ENCODE measurements at regions of chr17 and their contacts with region 1.

Region 1: GRCh38 chr17:7989781-7990655 is 12.4 kb upstream of the GUCY2D start:
- DNase-seq: peak; percentile 96
- ATAC-seq: peak; percentile 94
- H3K4me3 Mint-ChIP-seq: peak overlapping the region; percentile 77
- H3K27ac Mint-ChIP-seq: peak overlapping the region; percentile 75
- H3K4me1 Mint-ChIP-seq: peaks cover 17% of the 10 kb centered on the region
- H3K27me3 Mint-ChIP-seq: peaks cover 9% of the 10 kb centered on the region
- CTCF ChIP-seq: no peak

Region 2: GRCh38 chr17:7561028-7561575 is 428.9 kb before region 1 on chr17:
- CTCF ChIA-PET with region 1: no interaction called
- POLR2A ChIA-PET with region 1: no interaction called
- intact Hi-C with region 1: no loop called
- DNase-seq: peak; percentile 76
- ATAC-seq: peak; percentile 68
- H3K4me3 Mint-ChIP-seq: peak overlapping the region; percentile 92
- H3K27ac Mint-ChIP-seq: peak overlapping the region; percentile 96
- H3K4me1 Mint-ChIP-seq: peaks cover 60% of the 10 kb centered on the region
- H3K27me3 Mint-ChIP-seq: no peaks in the 10 kb centered on the region
- CTCF ChIP-seq: no peak

Region 3: DNA sequence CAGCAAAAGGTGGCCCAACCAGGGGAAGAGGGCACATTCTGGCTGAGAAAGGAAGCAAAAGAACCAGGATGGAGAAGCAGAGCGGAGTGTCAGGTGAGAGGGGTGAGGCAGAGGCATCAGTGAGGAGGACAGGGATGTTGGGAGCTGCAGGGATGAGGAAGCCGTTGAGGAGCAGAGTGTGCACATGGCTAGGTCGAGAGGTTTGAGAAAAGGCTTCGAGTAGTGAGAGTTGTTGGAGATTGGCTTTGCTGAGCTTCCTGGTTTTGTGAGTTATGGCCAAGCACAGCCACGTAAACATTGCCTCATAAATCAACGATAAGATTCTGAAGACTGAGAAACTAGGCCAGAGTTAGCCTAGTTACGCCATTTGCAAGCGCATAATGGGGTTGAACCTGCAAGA is 245.6 kb before region 1 on chr17:
- CTCF ChIA-PET with region 1: interaction called, 24 read pairs
- POLR2A ChIA-PET with region 1: interaction called, 5 read pairs
- intact Hi-C with region 1: loop called (anchors 1 kb)
- DNase-seq: no peak
- ATAC-seq: no peak
- H3K4me3 Mint-ChIP-seq: no peak overlapping the region
- H3K27ac Mint-ChIP-seq: no peak overlapping the region
- H3K4me1 Mint-ChIP-seq: no peaks in the 10 kb centered on the region
- H3K27me3 Mint-ChIP-seq: peaks cover 13% of the 10 kb centered on the region
- CTCF ChIP-seq: no peak

Region 4: GRCh38 chr17:7862692-7863437 is 127.2 kb before region 1 on chr17:
- CTCF ChIA-PET with region 1: interaction called, 77 read pairs
- POLR2A ChIA-PET with region 1: interaction called, 5 read pairs
- intact Hi-C with region 1: loop called (anchors 1 kb)
- DNase-seq: no peak
- ATAC-seq: no peak
- H3K4me3 Mint-ChIP-seq: no peak overlapping the region
- H3K27ac Mint-ChIP-seq: no peak overlapping the region
- H3K4me1 Mint-ChIP-seq: peaks cover 11% of the 10 kb centered on the region
- H3K27me3 Mint-ChIP-seq: no peaks in the 10 kb centered on the region
- CTCF ChIP-seq: peak; percentile 90

Region 5: GRCh38 chr17:7915611-7916382 is 74.2 kb before region 1 on chr17 and contains the start of gene RNF227:
- CTCF ChIA-PET with region 1: interaction called, 90 read pairs
- POLR2A ChIA-PET with region 1: interaction called, 24 read pairs
- intact Hi-C with region 1: loop called (anchors 1 kb)
- DNase-seq: peak; percentile 81
- ATAC-seq: peak; percentile 83
- H3K4me3 Mint-ChIP-seq: peak within 1 kb of the TSS; percentile 91
- H3K27ac Mint-ChIP-seq: peak within 1 kb of the TSS; percentile 87
- H3K4me1 Mint-ChIP-seq: peaks cover 23% of the 10 kb centered on the region
- H3K27me3 Mint-ChIP-seq: no peaks in the 10 kb centered on the region
- CTCF ChIP-seq: no peak
- total RNA-seq, gene RNF227: 2.5 and 2.8 TPM in 2 replicates

Region 6: DNA sequence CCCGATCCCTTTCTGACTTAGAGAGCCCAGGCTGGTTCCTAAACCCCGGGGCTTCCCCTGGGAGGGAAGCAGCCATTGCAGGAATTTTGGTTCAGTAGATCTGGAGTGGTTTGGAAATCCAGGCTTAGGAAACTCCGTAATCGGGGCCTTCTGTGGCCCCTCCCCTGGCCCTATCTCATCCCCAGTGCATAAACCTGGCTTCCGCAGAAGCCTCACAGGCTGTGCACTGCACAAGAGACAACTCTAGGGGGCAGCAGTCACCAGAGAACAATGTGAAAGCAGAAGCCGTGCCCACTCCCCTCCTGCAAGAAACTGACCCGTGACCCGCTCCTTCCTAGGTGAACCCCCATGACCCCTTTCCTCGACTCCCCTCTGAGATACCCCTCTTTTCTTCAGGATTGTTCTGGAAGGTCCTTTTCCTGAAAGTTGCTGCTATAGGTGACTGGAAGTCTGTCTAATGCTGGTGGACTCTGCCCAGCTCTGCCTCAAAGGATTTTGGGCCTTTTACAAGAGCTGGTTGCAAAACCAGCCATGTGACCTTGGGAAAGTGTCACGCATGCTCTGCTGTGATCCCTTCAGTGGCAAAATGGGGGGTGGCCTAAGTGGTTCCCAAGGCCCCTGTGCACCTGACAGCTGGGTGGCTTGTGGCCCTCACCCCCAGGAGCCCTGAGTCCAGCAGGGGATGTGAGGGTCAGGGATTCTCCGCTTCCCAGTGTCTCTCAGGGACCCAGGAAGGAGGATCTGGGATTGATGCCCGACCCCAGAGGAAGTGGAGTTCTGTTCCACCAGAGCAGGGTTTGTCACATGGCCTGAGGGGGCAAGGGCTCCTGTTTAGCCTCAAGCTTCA is 26.8 kb after region 1 on chr17:
- CTCF ChIA-PET with region 1: no interaction called
- POLR2A ChIA-PET with region 1: no interaction called
- intact Hi-C with region 1: no loop called
- DNase-seq: no peak
- ATAC-seq: peak; percentile 69
- H3K4me3 Mint-ChIP-seq: peak overlapping the region; percentile 66
- H3K27ac Mint-ChIP-seq: no peak overlapping the region
- H3K4me1 Mint-ChIP-seq: peaks cover 20% of the 10 kb centered on the region
- H3K27me3 Mint-ChIP-seq: peaks cover 52% of the 10 kb centered on the region
- CTCF ChIP-seq: no peak

Region 7: DNA sequence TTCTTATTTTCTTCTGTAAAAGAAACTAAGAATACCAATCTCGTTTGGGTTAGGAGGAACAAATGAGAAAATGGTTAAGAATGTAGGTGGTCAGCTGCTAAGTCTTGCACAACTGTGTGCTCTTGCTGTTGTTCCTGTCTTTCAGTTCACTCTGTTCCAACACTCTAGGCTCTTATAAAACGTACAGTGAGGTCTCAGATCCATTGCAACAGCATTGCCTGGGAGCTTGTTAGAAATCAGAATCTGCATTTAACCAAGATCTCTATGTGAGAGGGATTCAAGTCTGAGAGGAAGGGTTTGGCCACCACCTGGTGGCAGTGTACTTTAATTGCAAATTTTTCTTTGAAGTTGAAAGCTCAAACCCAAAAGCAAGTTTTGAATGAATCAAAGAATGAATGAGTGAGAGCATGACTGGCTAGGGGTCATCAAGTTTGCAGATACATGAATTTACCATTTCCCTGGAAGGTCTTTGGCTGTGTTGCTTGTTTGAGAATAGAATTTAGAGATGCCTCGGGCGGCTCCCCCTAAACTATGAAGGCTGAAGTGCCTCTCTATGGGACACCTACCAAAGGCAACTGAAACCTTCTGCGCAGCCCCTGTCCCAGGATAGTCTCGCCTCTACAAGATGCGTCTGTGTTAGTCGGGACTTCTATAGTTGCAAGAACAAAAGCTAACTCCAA is 51.4 kb after region 1 on chr17:
- CTCF ChIA-PET with region 1: interaction called, 4 read pairs
- POLR2A ChIA-PET with region 1: no interaction called
- intact Hi-C with region 1: loop called (anchors 5 kb)
- DNase-seq: no peak
- ATAC-seq: no peak
- H3K4me3 Mint-ChIP-seq: no peak overlapping the region
- H3K27ac Mint-ChIP-seq: no peak overlapping the region
- H3K4me1 Mint-ChIP-seq: peaks cover 3% of the 10 kb centered on the region
- H3K27me3 Mint-ChIP-seq: peaks cover 31% of the 10 kb centered on the region
- CTCF ChIP-seq: no peak

Region 8: DNA sequence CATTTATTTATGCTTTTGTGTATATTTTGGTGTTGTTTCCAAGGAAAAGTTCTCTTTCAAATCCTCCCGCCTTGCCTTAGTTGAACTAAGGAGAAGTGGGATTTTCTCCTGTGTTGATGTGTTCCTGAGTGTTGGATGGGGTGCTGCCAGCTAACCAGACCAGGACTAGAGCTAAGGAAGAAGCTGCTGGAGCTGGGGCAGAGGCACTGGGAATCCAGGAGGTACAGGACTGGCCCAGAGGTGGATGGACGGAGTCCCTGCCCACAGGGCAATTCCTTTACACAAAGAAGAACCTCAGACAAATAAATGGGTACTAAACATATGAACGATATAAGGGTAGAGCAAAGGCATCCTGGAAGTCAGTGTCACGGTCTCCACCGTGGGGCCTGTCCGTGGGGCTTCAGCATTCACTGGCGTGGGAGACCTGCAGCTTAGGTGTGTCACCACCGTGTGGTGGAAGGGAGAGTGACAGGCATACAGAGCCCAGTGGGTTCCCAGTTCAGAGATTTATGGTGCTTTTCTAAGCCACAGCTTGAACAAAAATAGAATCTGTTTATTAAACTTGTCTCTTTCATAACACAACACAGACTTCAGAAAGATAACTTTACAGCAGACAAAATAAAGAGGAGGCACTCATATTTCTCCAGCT is 1302.0 kb after region 1 on chr17:
- CTCF ChIA-PET with region 1: no interaction called
- POLR2A ChIA-PET with region 1: no interaction called
- intact Hi-C with region 1: no loop called
- DNase-seq: no peak
- ATAC-seq: peak; percentile 72
- H3K4me3 Mint-ChIP-seq: no peak overlapping the region
- H3K27ac Mint-ChIP-seq: no peak overlapping the region
- H3K4me1 Mint-ChIP-seq: peaks cover 25% of the 10 kb centered on the region
- H3K27me3 Mint-ChIP-seq: no peaks in the 10 kb centered on the region
- CTCF ChIP-seq: peak; percentile 41